Ovary (tissue), 10 donors: ENCODE measurements at regions of chr1 and their contacts with region 1.

Region 1: GRCh38 chr1:113140588-113141446 is 67.8 kb downstream of the LRIG2 start:
- DNase-seq: peak; percentile 55 to 67 (median 64)
- H3K4me3 ChIP-seq: no peak overlapping the region
- H3K27ac ChIP-seq: peak overlapping the region in 1 of 2 donors; percentile 48
- H3K4me1 ChIP-seq: peaks cover 9% of the 10 kb centered on the region
- H3K27me3 ChIP-seq: no peaks in the 10 kb centered on the region
- CTCF ChIP-seq: peak; percentile 52 to 79 (median 76)
- EP300 ChIP-seq: no peak
- POLR2A ChIP-seq: no peak

Region 2: DNA sequence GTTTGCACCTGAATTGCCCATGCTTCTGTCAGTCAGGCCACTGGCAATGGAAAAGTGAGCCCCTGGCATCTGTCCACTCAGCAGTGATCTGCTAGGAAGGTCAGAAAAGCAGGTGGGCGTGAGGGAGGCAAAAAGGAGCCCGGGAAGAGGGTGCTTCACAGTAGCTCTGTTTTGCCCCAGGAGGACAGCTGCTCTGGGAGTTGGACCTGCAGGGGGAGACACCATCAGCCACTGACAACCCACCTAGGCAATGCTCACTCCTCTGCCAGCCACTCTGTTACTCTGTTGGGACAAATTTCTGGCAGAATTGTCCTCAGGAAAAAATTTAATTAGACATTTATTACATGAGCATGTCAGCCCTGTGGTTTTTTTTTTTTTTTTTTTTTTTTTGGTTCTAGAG is 78.6 kb after region 1 on chr1:
- intact Hi-C with region 1: loop called in 1 of 4 experiments (anchors 10 kb)
- DNase-seq: peak in 1 of 5 donors; percentile 36
- H3K4me3 ChIP-seq: no peak overlapping the region
- H3K27ac ChIP-seq: peak overlapping the region in 1 of 2 donors; percentile 78
- H3K4me1 ChIP-seq: peaks cover 12% of the 10 kb centered on the region
- H3K27me3 ChIP-seq: no peaks in the 10 kb centered on the region
- CTCF ChIP-seq: no peak
- EP300 ChIP-seq: no peak
- POLR2A ChIP-seq: no peak

Region 3: DNA sequence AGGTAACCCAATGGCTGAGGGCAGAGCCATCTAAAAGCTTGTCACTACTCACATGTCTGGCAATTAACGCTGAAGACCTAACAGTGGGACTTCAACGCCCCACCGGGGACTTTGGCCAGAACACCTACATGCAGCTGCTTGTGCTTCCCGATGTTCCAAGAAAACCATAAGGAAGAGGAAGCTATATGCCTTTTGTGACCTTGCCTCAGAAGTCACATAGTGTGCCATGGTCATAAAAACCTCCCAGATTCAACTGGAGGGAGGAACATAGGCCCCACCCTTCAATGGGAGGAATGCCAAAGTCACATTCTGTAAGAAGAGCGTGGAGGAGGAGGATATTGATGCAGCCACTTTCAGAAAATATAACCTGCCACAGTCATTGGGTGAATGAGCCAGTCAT is 101.7 kb after region 1 on chr1:
- intact Hi-C with region 1: no loop called
- DNase-seq: no peak
- H3K4me3 ChIP-seq: no peak overlapping the region
- H3K27ac ChIP-seq: no peak overlapping the region
- H3K4me1 ChIP-seq: no peaks in the 10 kb centered on the region
- H3K27me3 ChIP-seq: no peaks in the 10 kb centered on the region
- CTCF ChIP-seq: no peak
- EP300 ChIP-seq: no peak
- POLR2A ChIP-seq: no peak

Region 4: DNA sequence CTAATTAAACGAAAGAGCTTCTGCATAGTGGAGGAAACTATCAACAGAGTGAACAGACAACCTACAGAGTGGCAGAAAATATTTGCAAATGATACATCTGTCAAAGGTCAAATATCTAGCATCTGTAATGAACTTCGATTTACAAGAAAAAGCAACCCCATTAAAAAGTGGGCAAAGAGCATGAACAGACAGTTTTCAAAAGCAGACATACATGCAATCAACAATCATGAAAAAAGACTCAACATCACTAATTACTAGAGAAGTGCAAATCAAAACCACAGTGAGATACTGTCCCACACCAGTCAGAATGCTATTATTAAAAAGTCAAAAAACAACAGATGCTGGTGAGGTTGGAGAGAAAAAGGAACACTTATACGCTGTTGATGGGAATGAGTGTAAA is 352.7 kb after region 1 on chr1:
- intact Hi-C with region 1: no loop called
- DNase-seq: no peak
- H3K4me3 ChIP-seq: no peak overlapping the region
- H3K27ac ChIP-seq: no peak overlapping the region
- H3K4me1 ChIP-seq: no peaks in the 10 kb centered on the region
- H3K27me3 ChIP-seq: no peaks in the 10 kb centered on the region
- CTCF ChIP-seq: no peak
- EP300 ChIP-seq: no peak
- POLR2A ChIP-seq: no peak

Region 5: GRCh38 chr1:113677250-113678158 is 536.7 kb after region 1 on chr1:
- intact Hi-C with region 1: loop called (anchors 5 to 10 kb)
- DNase-seq: peak in 1 of 5 donors; percentile 22
- H3K4me3 ChIP-seq: no peak overlapping the region
- H3K27ac ChIP-seq: no peak overlapping the region
- H3K4me1 ChIP-seq: no peaks in the 10 kb centered on the region
- H3K27me3 ChIP-seq: no peaks in the 10 kb centered on the region
- CTCF ChIP-seq: peak; percentile 15 to 53 (median 45)
- EP300 ChIP-seq: no peak
- POLR2A ChIP-seq: no peak